ENCODE measurements at regions of chr5 and their contacts with region 1.

Region 1: GRCh38 chr5:132103332-132103951 is 29.9 kb downstream of the CSF2 start:
- DNase-seq: peak; percentile 85
- H3K4me3 Mint-ChIP-seq: peak overlapping the region; percentile 44
- H3K27ac Mint-ChIP-seq: peak overlapping the region; percentile 97
- H3K4me1 Mint-ChIP-seq: peaks cover 83% of the 10 kb centered on the region
- H3K27me3 Mint-ChIP-seq: peaks cover 4% of the 10 kb centered on the region

Region 2: GRCh38 chr5:132073231-132074013 is 30.0 kb before region 1 on chr5 and contains the start of gene CSF2:
- CTCF ChIA-PET with region 1: interaction called, 4 read pairs
- POLR2A ChIA-PET with region 1: interaction called, 19 read pairs
- DNase-seq: no peak
- H3K4me3 Mint-ChIP-seq: peak within 1 kb of the TSS; percentile 62
- H3K27ac Mint-ChIP-seq: peak within 1 kb of the TSS; percentile 68
- H3K4me1 Mint-ChIP-seq: peaks cover 70% of the 10 kb centered on the region
- H3K27me3 Mint-ChIP-seq: no peaks in the 10 kb centered on the region
- total RNA-seq, gene CSF2: 30.8 to 32.7 TPM

Region 3: GRCh38 chr5:132114150-132115121 is 11.0 kb after region 1 on chr5:
- CTCF ChIA-PET with region 1: interaction called, 4 read pairs
- POLR2A ChIA-PET with region 1: interaction called, 25 read pairs
- DNase-seq: no peak
- H3K4me3 Mint-ChIP-seq: no peak overlapping the region
- H3K27ac Mint-ChIP-seq: peak overlapping the region; percentile 41
- H3K4me1 Mint-ChIP-seq: peaks cover 77% of the 10 kb centered on the region
- H3K27me3 Mint-ChIP-seq: no peaks in the 10 kb centered on the region

Region 4: GRCh38 chr5:132180134-132180745 is 76.8 kb after region 1 on chr5:
- CTCF ChIA-PET with region 1: interaction called, 12 read pairs
- POLR2A ChIA-PET with region 1: interaction called, 4 read pairs
- DNase-seq: no peak
- H3K4me3 Mint-ChIP-seq: no peak overlapping the region
- H3K27ac Mint-ChIP-seq: peak overlapping the region; percentile 58
- H3K4me1 Mint-ChIP-seq: peaks cover 44% of the 10 kb centered on the region
- H3K27me3 Mint-ChIP-seq: no peaks in the 10 kb centered on the region

Region 5: DNA sequence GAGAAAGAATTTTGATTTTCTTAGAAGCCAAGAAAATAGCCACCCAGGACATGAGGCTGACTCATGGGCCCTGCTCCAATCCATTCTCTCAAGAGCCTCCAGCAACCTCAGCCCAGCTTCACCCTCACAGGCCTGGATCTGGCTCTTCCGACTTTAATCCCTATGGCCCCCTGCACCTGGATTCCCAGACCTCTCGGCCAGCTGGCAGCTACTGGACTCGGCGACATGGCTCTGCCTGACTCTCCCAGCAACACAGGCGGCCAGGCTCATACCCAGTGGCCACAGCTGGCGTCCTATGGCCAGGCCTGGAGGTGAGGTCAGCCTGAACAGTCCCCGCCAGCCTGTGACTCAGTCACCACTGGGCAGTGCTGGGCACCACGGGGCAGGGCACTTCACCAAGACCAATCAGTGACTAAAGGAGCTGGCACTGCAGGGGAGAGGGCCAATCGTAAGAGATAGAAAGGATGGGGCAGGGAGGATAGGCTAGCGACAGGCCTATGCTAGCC is 147.8 kb after region 1 on chr5:
- CTCF ChIA-PET with region 1: no interaction called
- POLR2A ChIA-PET with region 1: no interaction called
- DNase-seq: no peak
- H3K4me3 Mint-ChIP-seq: no peak overlapping the region
- H3K27ac Mint-ChIP-seq: no peak overlapping the region
- H3K4me1 Mint-ChIP-seq: no peaks in the 10 kb centered on the region
- H3K27me3 Mint-ChIP-seq: peaks cover 19% of the 10 kb centered on the region

Region 6: DNA sequence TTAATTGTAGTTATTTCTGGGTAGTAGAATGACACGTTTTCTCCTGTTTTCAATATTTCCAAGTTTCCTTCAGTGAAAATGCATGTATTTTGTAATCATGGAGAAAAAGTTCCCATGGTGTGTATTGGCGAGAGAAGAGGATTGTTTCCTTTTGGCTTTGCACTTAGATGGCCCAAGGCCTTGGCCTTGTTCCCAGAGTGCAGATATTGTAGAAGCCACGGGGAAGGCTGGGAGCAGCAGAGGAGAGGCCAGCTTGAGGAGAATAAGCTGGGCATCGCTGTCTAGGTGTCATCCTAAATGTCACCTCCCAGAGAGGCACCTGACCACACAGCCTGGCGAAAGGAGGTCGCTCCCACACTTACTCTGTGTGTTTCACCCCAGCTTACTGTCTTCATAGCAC is 343.2 kb after region 1 on chr5:
- CTCF ChIA-PET with region 1: no interaction called
- POLR2A ChIA-PET with region 1: no interaction called
- DNase-seq: no peak
- H3K4me3 Mint-ChIP-seq: no peak overlapping the region
- H3K27ac Mint-ChIP-seq: no peak overlapping the region
- H3K4me1 Mint-ChIP-seq: peaks cover 60% of the 10 kb centered on the region
- H3K27me3 Mint-ChIP-seq: no peaks in the 10 kb centered on the region

Measured in activated CD4-positive, alpha-beta memory T cell treated with anti-CD3 and anti-CD28 coated beads, Interleukin-2, amount 10 ng/mL, durations not matched to agents 7 days and 5 days (primary cell).